ENCODE measurements at regions of chr5 and their contacts with region 1.

Region 1: DNA sequence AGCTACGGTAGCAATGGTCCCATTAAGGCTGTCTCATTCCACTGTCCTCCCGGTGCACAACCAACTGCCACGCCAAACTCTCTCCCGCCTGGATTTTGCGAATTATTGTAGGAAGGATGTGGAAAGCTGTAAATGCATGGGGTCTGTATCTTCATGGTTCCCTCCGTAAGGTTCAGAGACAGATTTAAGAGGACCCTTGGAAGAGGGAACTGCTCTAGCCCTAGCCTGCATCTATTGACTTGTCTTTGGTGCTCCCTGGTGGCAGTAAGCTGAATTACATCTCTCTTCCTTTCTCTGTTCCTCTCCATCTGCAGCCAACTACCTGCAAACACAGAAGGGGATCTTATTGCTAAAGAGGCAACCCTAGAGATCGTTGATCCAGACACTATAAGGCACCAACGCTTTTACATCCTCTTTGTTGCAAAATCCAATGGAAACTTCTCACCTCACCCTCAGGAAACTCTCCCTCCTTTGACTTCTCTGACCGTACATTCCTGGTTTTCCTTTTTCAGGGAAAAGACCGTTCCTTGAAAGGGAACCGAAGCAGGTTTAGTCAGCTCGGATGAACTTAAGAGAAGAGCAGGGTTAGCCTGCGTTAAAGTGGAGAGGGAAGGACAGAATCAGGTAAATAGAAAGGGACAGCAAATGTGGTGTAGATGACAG is 11.9 kb downstream of the CAPSL start:
- DNase-seq: peak; percentile 26 to 74 (median 66)
- H3K4me3 ChIP-seq: no peak overlapping the region
- H3K4me3 Mint-ChIP-seq: peak overlapping the region in 6 of 7 donors; percentile 52 to 76 (median 66)
- H3K27ac ChIP-seq: no peak overlapping the region
- H3K27ac Mint-ChIP-seq: peak overlapping the region in 2 of 8 donors; percentile 27 to 95
- H3K4me1 ChIP-seq: peaks cover 22% of the 10 kb centered on the region
- H3K4me1 Mint-ChIP-seq: peaks cover 24 to 44% (median 39%) of the 10 kb centered on the region in 3 donors
- H3K27me3 ChIP-seq: no peaks in the 10 kb centered on the region
- H3K27me3 Mint-ChIP-seq: peaks cover 1 to 16% of the 10 kb centered on the region in 2 donors

Region 2: GRCh38 chr5:35089334-35090314 is 836.9 kb before region 1 on chr5:
- CTCF ChIA-PET with region 1: interaction called, 41 read pairs
- POLR2A ChIA-PET with region 1: no interaction called
- DNase-seq: peak; percentile 11 to 61 (median 29)
- H3K4me3 ChIP-seq: no peak overlapping the region
- H3K4me3 Mint-ChIP-seq: no peak overlapping the region
- H3K27ac ChIP-seq: no peak overlapping the region
- H3K27ac Mint-ChIP-seq: no peak overlapping the region
- H3K4me1 ChIP-seq: no peaks in the 10 kb centered on the region
- H3K4me1 Mint-ChIP-seq: no peaks in the 10 kb centered on the region
- H3K27me3 ChIP-seq: no peaks in the 10 kb centered on the region
- H3K27me3 Mint-ChIP-seq: peaks cover 12 to 18% of the 10 kb centered on the region in 2 donors

Region 3: DNA sequence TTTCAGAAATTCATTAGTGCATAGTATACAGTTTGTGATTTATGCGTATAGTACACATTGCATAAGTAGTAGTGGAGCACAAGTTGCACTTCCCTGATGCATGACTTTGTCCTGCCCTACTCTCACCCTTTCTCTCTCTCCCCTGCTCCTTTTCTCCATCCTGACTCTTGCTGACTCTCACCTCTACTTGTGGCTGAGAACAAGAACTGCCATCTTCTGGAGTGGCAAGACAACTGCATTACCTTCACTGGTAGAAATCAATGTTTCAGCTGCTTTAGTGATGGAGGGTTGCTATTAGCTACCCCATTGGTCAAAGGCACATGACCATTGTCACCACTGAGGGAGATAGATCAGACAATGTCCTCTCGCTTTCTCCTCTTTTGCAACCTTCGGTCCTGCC is 282.0 kb before region 1 on chr5:
- CTCF ChIA-PET with region 1: interaction called, 203 read pairs
- POLR2A ChIA-PET with region 1: no interaction called
- DNase-seq: no peak
- H3K4me3 ChIP-seq: no peak overlapping the region
- H3K4me3 Mint-ChIP-seq: no peak overlapping the region
- H3K27ac ChIP-seq: no peak overlapping the region
- H3K27ac Mint-ChIP-seq: no peak overlapping the region
- H3K4me1 ChIP-seq: no peaks in the 10 kb centered on the region
- H3K4me1 Mint-ChIP-seq: no peaks in the 10 kb centered on the region
- H3K27me3 ChIP-seq: no peaks in the 10 kb centered on the region
- H3K27me3 Mint-ChIP-seq: no peaks in the 10 kb centered on the region

Region 4: GRCh38 chr5:35777358-35778087 is 149.0 kb before region 1 on chr5:
- CTCF ChIA-PET with region 1: interaction called, 18 read pairs
- POLR2A ChIA-PET with region 1: interaction called, 4 read pairs
- DNase-seq: peak; percentile 62 to 78 (median 67)
- H3K4me3 ChIP-seq: no peak overlapping the region
- H3K4me3 Mint-ChIP-seq: peak overlapping the region in 6 of 7 donors; percentile 71 to 86 (median 78)
- H3K27ac ChIP-seq: no peak overlapping the region
- H3K27ac Mint-ChIP-seq: peak overlapping the region; percentile 65 to 99 (median 96)
- H3K4me1 ChIP-seq: peaks cover 44% of the 10 kb centered on the region
- H3K4me1 Mint-ChIP-seq: peaks cover 58 to 84% (median 82%) of the 10 kb centered on the region in 3 donors
- H3K27me3 ChIP-seq: no peaks in the 10 kb centered on the region
- H3K27me3 Mint-ChIP-seq: no peaks in the 10 kb centered on the region

Region 5: GRCh38 chr5:35869685-35870277 is 56.7 kb before region 1 on chr5:
- CTCF ChIA-PET with region 1: interaction called, 13 read pairs
- POLR2A ChIA-PET with region 1: no interaction called
- DNase-seq: no peak
- H3K4me3 ChIP-seq: no peak overlapping the region
- H3K4me3 Mint-ChIP-seq: peak overlapping the region; percentile 8 to 76 (median 50)
- H3K27ac ChIP-seq: no peak overlapping the region
- H3K27ac Mint-ChIP-seq: peak overlapping the region; percentile 71 to 99 (median 86)
- H3K4me1 ChIP-seq: peaks cover 77% of the 10 kb centered on the region
- H3K4me1 Mint-ChIP-seq: peaks cover 86 to 99% (median 94%) of the 10 kb centered on the region in 3 donors
- H3K27me3 ChIP-seq: no peaks in the 10 kb centered on the region
- H3K27me3 Mint-ChIP-seq: no peaks in the 10 kb centered on the region

Region 6: GRCh38 chr5:35938568-35939227 is 12.2 kb after region 1 on chr5 and contains the start of gene CAPSL:
- CTCF ChIA-PET with region 1: interaction called, 10 read pairs
- POLR2A ChIA-PET with region 1: no interaction called
- DNase-seq: no peak
- H3K4me3 ChIP-seq: no peak within 1 kb of the TSS
- H3K4me3 Mint-ChIP-seq: no peak within 1 kb of the TSS
- H3K27ac ChIP-seq: no peak within 1 kb of the TSS
- H3K27ac Mint-ChIP-seq: no peak within 1 kb of the TSS
- H3K4me1 ChIP-seq: no peaks in the 10 kb centered on the region
- H3K4me1 Mint-ChIP-seq: no peaks in the 10 kb centered on the region
- H3K27me3 ChIP-seq: no peaks in the 10 kb centered on the region
- H3K27me3 Mint-ChIP-seq: peaks cover 11 to 31% of the 10 kb centered on the region in 2 donors
- total RNA-seq, gene CAPSL: 0.40 to 0.59 TPM

Region 7: GRCh38 chr5:35963381-35963843 is 36.9 kb after region 1 on chr5:
- CTCF ChIA-PET with region 1: no interaction called
- POLR2A ChIA-PET with region 1: no interaction called
- DNase-seq: no peak
- H3K4me3 ChIP-seq: no peak overlapping the region
- H3K4me3 Mint-ChIP-seq: no peak overlapping the region
- H3K27ac ChIP-seq: no peak overlapping the region
- H3K27ac Mint-ChIP-seq: no peak overlapping the region
- H3K4me1 ChIP-seq: no peaks in the 10 kb centered on the region
- H3K4me1 Mint-ChIP-seq: no peaks in the 10 kb centered on the region
- H3K27me3 ChIP-seq: no peaks in the 10 kb centered on the region
- H3K27me3 Mint-ChIP-seq: peaks cover 24 to 67% of the 10 kb centered on the region in 2 donors

Region 8: GRCh38 chr5:36305571-36306326 is 379.2 kb after region 1 on chr5:
- CTCF ChIA-PET with region 1: no interaction called
- POLR2A ChIA-PET with region 1: no interaction called
- DNase-seq: peak in 1 of 5 donors; percentile 1
- H3K4me3 ChIP-seq: no peak overlapping the region
- H3K4me3 Mint-ChIP-seq: no peak overlapping the region
- H3K27ac ChIP-seq: no peak overlapping the region
- H3K27ac Mint-ChIP-seq: no peak overlapping the region
- H3K4me1 ChIP-seq: no peaks in the 10 kb centered on the region
- H3K4me1 Mint-ChIP-seq: peaks cover 0 to 16% (median 6%) of the 10 kb centered on the region in 3 donors
- H3K27me3 ChIP-seq: no peaks in the 10 kb centered on the region
- H3K27me3 Mint-ChIP-seq: peaks cover 2 to 31% of the 10 kb centered on the region in 2 donors